ENCODE measurements at regions of chr5 and their contacts with region 1.

Region 1: GRCh38 chr5:142881076-142881783 is 111.1 kb downstream of the ARHGAP26 start:
- DNase-seq: no peak
- H3K4me3 Mint-ChIP-seq: no peak overlapping the region
- H3K27ac Mint-ChIP-seq: no peak overlapping the region
- H3K4me1 Mint-ChIP-seq: no peaks in the 10 kb centered on the region
- H3K27me3 Mint-ChIP-seq: no peaks in the 10 kb centered on the region

Region 2: DNA sequence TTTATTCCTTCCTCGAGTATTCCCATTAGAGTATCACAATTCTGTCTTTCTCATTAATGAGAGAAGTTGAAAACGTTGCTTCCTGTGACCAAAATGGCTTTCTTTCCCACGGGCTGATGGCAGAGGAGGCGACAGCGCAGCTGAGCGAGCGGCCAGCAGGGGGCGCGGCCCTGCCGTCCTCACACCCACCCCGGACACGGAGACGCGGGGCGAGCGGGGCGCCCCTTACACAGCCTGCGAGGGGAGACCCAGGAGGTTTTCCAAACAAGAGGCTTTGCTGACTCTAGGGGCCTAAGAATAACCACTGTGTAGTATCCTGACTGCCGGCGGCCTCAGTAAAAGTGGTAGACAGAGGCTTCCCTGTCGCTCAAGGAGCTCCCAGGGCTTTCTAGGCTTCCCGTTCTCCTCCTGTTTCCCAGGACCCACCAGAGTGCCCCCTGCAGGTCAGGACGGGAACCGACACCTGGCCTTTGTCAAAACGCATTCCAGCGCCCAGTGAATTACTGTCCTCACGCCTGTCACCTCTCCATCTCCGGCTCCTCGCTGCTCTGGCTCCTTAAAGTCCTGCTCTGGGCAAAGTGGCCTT is 168.0 kb before region 1 on chr5:
- CTCF ChIA-PET with region 1: interaction called, 217 read pairs
- DNase-seq: peak; percentile 87
- H3K4me3 Mint-ChIP-seq: peak overlapping the region; percentile 68
- H3K27ac Mint-ChIP-seq: no peak overlapping the region
- H3K4me1 Mint-ChIP-seq: peaks cover 6% of the 10 kb centered on the region
- H3K27me3 Mint-ChIP-seq: peaks cover 32% of the 10 kb centered on the region

Region 3: GRCh38 chr5:142720641-142721271 is 160.5 kb before region 1 on chr5:
- CTCF ChIA-PET with region 1: interaction called, 217 read pairs
- DNase-seq: no peak
- H3K4me3 Mint-ChIP-seq: no peak overlapping the region
- H3K27ac Mint-ChIP-seq: no peak overlapping the region
- H3K4me1 Mint-ChIP-seq: no peaks in the 10 kb centered on the region
- H3K27me3 Mint-ChIP-seq: peaks cover 28% of the 10 kb centered on the region

Region 4: GRCh38 chr5:142740474-142741242 is 140.6 kb before region 1 on chr5:
- CTCF ChIA-PET with region 1: interaction called, 169 read pairs
- DNase-seq: no peak
- H3K4me3 Mint-ChIP-seq: no peak overlapping the region
- H3K27ac Mint-ChIP-seq: no peak overlapping the region
- H3K4me1 Mint-ChIP-seq: no peaks in the 10 kb centered on the region
- H3K27me3 Mint-ChIP-seq: peaks cover 40% of the 10 kb centered on the region

Region 5: DNA sequence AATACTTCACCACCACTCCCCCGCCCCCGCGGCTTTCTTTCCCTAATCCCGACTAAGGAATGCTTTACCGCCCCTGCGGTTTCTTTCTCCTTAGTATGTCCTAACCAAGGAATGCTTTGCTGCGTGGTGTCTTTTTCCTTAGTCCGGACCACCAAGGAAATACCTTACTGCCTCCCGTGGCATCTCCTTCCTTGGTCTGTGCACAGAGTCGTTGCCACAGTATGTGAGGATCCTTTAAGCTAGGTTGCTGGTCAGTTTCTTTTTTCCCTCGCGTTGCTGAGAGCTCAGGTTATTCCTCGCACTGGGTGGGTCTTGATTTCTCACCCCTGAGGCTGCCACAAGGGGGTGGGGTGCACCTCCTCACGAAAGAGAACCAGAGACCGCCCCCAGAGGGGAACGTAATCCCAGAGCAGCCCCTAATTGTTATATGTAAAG is 212.9 kb after region 1 on chr5:
- CTCF ChIA-PET with region 1: no interaction called
- DNase-seq: no peak
- H3K4me3 Mint-ChIP-seq: no peak overlapping the region
- H3K27ac Mint-ChIP-seq: no peak overlapping the region
- H3K4me1 Mint-ChIP-seq: no peaks in the 10 kb centered on the region
- H3K27me3 Mint-ChIP-seq: no peaks in the 10 kb centered on the region

Measured in activated naive CD4-positive, alpha-beta T cell treated with anti-CD3 and anti-CD28 coated beads, Interleukin-2, amount 10 ng/mL, durations not matched to agents 7 days and 5 days (primary cell).